ENCODE measurements at regions of chr10 and their contacts with region 1.

Region 1: DNA sequence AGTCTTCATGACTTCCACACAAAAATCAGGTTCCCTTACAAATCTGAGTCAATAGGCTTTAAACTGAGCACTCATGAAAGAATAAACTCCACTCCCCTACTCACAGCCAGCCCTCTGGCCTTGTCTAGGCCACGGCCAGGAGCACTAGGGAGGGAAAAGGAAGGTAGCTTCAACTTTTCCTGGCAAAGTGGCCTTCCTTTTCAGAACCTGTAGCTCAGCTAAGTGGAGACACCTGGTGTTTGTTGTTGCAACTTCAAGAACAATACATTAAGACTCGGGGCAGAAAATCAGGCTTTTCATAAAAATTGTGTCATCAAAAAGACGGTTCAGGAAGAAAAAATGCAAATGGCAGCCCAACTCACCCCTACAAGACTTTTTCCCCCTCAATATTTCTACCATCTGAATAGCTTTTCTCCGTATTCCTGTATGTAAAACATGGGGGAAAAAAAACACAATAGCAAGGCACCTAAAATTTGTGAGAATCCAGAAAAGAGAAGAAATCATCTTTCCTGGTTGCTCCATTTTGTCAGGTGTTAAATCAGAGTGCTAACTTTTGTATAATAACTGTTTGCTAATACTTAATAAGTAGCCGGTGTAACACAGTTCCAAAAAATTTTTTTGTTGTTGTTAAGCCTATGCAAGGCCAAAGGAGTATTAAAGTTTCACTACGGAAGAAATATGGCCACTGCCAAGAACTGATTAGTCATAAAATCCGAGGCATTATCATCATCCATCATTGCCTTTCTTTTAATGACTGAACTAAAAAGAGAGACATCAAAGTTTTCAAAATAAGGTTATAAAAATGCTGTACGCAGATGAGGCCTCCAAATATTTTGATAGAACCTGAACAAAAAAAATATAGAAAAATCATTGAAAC is 66.2 kb upstream of the ARID5B start:
- DNase-seq: peak; percentile 70 to 74
- H3K4me3 ChIP-seq: no peak overlapping the region
- H3K4me3 Mint-ChIP-seq: peak overlapping the region; percentile 58
- H3K27ac Mint-ChIP-seq: peak overlapping the region; percentile 94
- H3K4me1 ChIP-seq: peaks cover 80% of the 10 kb centered on the region
- H3K4me1 Mint-ChIP-seq: peaks cover 61% of the 10 kb centered on the region
- H3K27me3 ChIP-seq: no peaks in the 10 kb centered on the region
- H3K27me3 Mint-ChIP-seq: no peaks in the 10 kb centered on the region
- CTCF ChIP-seq: peak; percentile 75 to 85

Region 2: GRCh38 chr10:61223576-61223975 is 611.7 kb before region 1 on chr10:
- CTCF ChIA-PET with region 1: no interaction called
- POLR2A ChIA-PET with region 1: no interaction called
- intact Hi-C with region 1: no loop called
- DNase-seq: no peak
- H3K4me3 ChIP-seq: no peak overlapping the region
- H3K4me3 Mint-ChIP-seq: no peak overlapping the region
- H3K27ac Mint-ChIP-seq: no peak overlapping the region
- H3K4me1 ChIP-seq: no peaks in the 10 kb centered on the region
- H3K4me1 Mint-ChIP-seq: no peaks in the 10 kb centered on the region
- H3K27me3 ChIP-seq: no peaks in the 10 kb centered on the region
- H3K27me3 Mint-ChIP-seq: peaks cover 4% of the 10 kb centered on the region
- CTCF ChIP-seq: no peak

Region 3: DNA sequence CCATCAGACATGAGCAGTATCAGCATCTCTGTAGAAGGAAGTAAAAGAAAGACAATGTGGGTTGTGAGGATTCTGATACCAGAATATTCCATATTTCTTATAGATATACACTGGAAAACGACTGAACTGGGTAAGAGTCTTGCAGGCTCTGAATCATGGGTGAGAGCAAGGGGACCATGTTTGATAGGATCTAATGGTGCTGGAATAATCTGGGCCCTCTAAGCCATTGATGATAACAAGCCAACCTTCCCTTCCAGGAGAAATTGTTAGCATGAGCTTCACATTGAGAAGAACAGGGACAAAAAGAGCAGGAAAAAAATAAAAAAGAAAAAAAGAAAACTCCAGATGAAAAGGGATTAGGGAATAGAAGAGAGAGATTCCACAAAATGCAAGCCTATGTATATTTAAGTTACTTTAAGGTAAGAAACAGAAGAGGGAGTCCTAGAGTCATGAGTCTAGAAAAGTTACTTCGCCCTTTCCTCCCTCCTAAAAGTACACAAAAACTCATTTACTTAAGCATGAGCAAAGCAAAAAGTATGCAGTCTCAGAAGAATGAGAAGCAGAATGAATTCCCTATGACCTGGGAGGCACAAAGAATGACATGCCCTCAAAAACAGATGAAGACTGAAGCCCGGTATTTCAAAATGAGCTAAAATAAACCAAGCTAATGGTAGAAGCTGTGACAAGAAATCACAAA is 564.0 kb before region 1 on chr10:
- CTCF ChIA-PET with region 1: no interaction called
- POLR2A ChIA-PET with region 1: no interaction called
- intact Hi-C with region 1: loop called (anchors 5 kb)
- DNase-seq: peak in 1 of 2 experiments; percentile 68
- H3K4me3 ChIP-seq: no peak overlapping the region
- H3K4me3 Mint-ChIP-seq: peak overlapping the region; percentile 51
- H3K27ac Mint-ChIP-seq: peak overlapping the region; percentile 19
- H3K4me1 ChIP-seq: peaks cover 17% of the 10 kb centered on the region
- H3K4me1 Mint-ChIP-seq: peaks cover 12% of the 10 kb centered on the region
- H3K27me3 ChIP-seq: no peaks in the 10 kb centered on the region
- H3K27me3 Mint-ChIP-seq: no peaks in the 10 kb centered on the region
- CTCF ChIP-seq: peak; percentile 55 to 62

Region 4: DNA sequence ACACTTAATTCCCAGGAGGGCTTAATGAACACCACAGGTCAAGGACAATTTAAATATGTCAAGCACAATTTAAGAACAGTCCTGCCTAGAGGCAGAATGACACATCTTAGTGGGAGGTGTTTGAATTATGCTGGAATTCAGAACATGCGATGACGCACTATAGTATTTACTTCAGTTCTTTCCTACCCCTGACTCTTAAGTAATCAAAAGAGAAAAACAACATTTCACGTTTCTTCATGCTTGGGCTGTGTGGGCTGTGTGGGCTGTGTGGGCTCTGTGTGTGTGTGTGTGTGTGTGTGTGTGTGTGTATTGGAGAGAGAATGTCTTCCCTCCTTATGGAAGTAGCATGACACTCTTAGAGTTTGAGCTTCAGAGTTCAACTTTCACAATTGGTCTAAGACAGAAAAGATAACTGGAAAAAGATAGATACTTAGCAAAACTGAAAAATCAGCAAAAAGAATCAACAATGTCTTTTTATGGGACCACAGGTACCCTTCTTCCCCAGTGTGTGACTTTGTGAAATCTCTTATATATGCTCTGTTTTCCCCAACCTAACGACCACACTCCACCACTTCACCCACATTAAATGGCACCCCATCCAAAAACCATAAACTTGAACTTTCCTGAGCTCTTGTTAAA is 206.3 kb before region 1 on chr10:
- CTCF ChIA-PET with region 1: no interaction called
- POLR2A ChIA-PET with region 1: interaction called, 5 read pairs
- intact Hi-C with region 1: loop called (anchors 5 kb)
- DNase-seq: peak in 1 of 2 experiments; percentile 55
- H3K4me3 ChIP-seq: no peak overlapping the region
- H3K4me3 Mint-ChIP-seq: peak overlapping the region; percentile 8
- H3K27ac Mint-ChIP-seq: peak overlapping the region; percentile 78
- H3K4me1 ChIP-seq: peaks cover 17% of the 10 kb centered on the region
- H3K4me1 Mint-ChIP-seq: peaks cover 19% of the 10 kb centered on the region
- H3K27me3 ChIP-seq: no peaks in the 10 kb centered on the region
- H3K27me3 Mint-ChIP-seq: no peaks in the 10 kb centered on the region
- CTCF ChIP-seq: no peak

Region 5: GRCh38 chr10:61812052-61812721 is 23.1 kb before region 1 on chr10:
- CTCF ChIA-PET with region 1: no interaction called
- POLR2A ChIA-PET with region 1: no interaction called
- intact Hi-C with region 1: no loop called
- DNase-seq: no peak
- H3K4me3 ChIP-seq: no peak overlapping the region
- H3K4me3 Mint-ChIP-seq: no peak overlapping the region
- H3K27ac Mint-ChIP-seq: no peak overlapping the region
- H3K4me1 ChIP-seq: no peaks in the 10 kb centered on the region
- H3K4me1 Mint-ChIP-seq: no peaks in the 10 kb centered on the region
- H3K27me3 ChIP-seq: no peaks in the 10 kb centered on the region
- H3K27me3 Mint-ChIP-seq: no peaks in the 10 kb centered on the region
- CTCF ChIP-seq: no peak

Region 6: DNA sequence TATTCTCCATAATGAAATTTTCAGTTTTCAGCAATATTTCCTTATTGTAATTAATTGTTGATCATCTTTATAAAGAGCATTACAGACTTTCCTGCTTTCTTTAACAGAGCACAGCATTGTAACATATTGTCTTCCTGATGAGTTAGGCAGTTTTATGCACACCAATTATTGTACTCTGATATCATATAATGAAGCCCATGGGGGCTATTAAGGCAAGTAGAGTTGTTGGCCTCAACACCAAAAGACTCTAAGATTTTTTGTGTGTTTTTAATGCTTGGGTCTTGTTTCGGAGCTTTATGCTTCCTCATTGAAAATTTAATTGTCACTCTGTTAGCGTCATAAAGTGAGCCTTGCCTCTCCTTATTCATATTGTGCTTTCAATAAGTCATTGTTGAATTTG is 17.0 kb after region 1 on chr10:
- CTCF ChIA-PET with region 1: interaction called, 16 read pairs
- POLR2A ChIA-PET with region 1: interaction called, 17 read pairs
- intact Hi-C with region 1: loop called (anchors 1 kb)
- DNase-seq: no peak
- H3K4me3 ChIP-seq: no peak overlapping the region
- H3K4me3 Mint-ChIP-seq: no peak overlapping the region
- H3K27ac Mint-ChIP-seq: peak overlapping the region; percentile 51
- H3K4me1 ChIP-seq: peaks cover 46% of the 10 kb centered on the region
- H3K4me1 Mint-ChIP-seq: peaks cover 44% of the 10 kb centered on the region
- H3K27me3 ChIP-seq: no peaks in the 10 kb centered on the region
- H3K27me3 Mint-ChIP-seq: no peaks in the 10 kb centered on the region
- CTCF ChIP-seq: no peak

Region 7: DNA sequence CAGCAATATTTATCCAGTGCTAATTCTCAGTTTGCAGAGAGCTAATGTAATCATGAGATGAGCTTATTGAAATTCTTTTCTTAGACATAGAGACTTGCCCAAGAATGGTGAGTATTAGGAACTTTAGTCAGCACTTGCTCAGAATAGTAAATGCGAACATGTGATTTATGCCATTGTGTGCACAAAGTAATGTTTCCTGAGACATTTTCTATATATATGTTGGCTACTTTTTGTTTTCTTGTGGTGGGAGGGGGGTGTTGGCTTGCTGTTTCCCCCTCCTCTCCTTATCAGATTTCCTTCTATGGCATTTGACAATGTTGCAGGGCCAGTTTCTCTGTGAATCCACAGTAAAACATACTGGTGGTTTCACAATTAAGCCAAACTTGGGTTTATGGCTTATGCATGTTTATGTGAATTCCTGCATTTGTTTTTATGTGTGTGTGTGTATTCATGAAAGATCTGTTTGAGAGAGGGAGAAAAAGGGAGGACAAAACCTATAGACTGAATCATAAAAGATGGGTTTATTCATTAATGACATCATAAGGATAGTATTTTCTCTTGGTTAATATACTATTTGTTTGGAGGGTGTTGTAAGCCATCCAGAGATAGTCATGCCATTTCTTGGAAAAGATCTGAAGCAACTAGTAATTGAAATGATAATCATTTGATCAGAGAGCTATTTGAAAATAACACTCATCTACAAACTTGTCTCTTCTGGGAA is 102.5 kb after region 1 on chr10:
- CTCF ChIA-PET with region 1: interaction called, 3 read pairs
- POLR2A ChIA-PET with region 1: no interaction called
- intact Hi-C with region 1: loop called (anchors 1 kb)
- DNase-seq: peak; percentile 78 to 90
- H3K4me3 ChIP-seq: no peak overlapping the region
- H3K4me3 Mint-ChIP-seq: peak overlapping the region; percentile 37
- H3K27ac Mint-ChIP-seq: peak overlapping the region; percentile 33
- H3K4me1 ChIP-seq: peaks cover 88% of the 10 kb centered on the region
- H3K4me1 Mint-ChIP-seq: peaks cover 73% of the 10 kb centered on the region
- H3K27me3 ChIP-seq: no peaks in the 10 kb centered on the region
- H3K27me3 Mint-ChIP-seq: no peaks in the 10 kb centered on the region
- CTCF ChIP-seq: no peak

Region 8: DNA sequence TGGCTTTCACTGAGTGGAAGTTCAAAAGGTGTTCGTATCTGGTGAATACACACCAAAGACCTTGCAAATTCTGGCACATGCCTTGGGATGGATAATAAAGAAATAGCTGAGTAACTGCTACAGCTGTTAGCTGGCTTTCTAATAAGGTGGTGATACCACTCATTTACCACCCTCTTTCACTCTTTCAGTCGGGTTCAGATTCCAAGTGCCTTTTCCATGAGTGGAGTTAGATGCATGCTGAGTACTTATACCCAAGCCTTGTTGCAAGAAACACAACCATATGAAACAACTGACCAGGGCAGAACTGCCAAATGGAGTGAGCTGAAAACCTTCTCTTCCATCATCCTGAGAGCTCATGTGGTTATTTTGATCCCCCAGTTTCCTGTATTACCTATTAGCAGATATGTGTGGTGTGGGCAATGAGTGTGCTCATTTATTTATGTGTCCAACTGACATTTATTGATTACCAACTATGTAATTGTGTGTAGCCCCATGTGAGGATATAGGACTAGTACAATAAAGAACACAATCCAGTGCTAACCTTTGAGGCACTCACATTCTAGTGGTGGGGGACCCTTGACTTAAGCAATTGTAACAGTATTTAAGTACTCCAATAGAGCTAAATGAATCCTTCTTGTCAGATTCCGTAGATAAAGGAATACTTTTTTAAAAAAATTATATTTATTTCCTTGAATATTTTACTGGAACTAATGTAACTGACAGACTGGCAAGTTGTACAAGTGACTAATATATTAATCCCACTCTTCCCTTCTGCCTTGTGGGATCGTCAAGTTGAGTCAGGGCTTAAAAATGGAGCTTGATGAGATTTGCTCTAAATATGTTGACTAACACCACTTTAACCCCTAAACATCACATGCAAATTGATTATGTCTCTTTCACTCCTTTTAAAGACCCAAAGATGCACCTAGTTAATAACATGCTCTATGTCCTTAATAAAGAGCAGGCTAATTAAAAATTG is 190.9 kb after region 1 on chr10:
- CTCF ChIA-PET with region 1: no interaction called
- POLR2A ChIA-PET with region 1: no interaction called
- intact Hi-C with region 1: loop called (anchors 1 kb)
- DNase-seq: no peak
- H3K4me3 ChIP-seq: no peak overlapping the region
- H3K4me3 Mint-ChIP-seq: no peak overlapping the region
- H3K27ac Mint-ChIP-seq: peak overlapping the region; percentile 82
- H3K4me1 ChIP-seq: peaks cover 91% of the 10 kb centered on the region
- H3K4me1 Mint-ChIP-seq: peaks cover 90% of the 10 kb centered on the region
- H3K27me3 ChIP-seq: no peaks in the 10 kb centered on the region
- H3K27me3 Mint-ChIP-seq: no peaks in the 10 kb centered on the region
- CTCF ChIP-seq: no peak

Region 9: DNA sequence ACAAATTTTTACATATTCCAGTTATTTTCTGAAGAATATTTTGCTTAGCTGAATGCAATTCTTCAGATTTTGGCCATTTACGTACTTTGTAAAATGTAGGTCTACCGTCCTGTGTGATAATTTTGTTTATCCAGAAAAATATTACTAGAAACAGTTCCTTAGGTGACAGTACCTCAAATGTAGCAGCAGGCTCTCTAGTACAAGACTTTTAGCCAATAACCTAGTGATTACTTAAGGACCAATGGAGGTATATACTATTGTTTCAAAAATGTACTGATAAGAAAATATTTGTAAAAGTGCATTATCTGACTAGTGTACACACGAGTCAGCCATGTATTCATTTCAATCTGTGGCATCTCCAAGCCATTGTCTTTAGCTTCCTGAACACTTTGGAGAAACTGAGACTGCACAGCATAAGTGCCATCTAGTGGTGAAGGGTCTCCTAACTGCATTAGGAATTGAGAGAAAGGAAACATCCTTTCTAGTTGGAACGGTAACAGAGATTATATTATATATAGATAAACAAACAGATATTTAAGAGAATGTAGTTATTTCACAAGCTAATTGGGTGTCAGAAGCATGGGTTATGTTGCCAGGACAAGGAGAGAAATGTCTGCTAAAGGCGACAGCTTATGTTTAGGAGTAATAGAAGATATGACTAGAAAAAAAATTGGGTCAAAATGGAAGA is 409.6 kb after region 1 on chr10:
- CTCF ChIA-PET with region 1: interaction called, 4 read pairs
- POLR2A ChIA-PET with region 1: no interaction called
- intact Hi-C with region 1: loop called (anchors 2 kb)
- DNase-seq: peak; percentile 70 to 82
- H3K4me3 ChIP-seq: no peak overlapping the region
- H3K4me3 Mint-ChIP-seq: no peak overlapping the region
- H3K27ac Mint-ChIP-seq: peak overlapping the region; percentile 33
- H3K4me1 ChIP-seq: peaks cover 25% of the 10 kb centered on the region
- H3K4me1 Mint-ChIP-seq: peaks cover 39% of the 10 kb centered on the region
- H3K27me3 ChIP-seq: no peaks in the 10 kb centered on the region
- H3K27me3 Mint-ChIP-seq: no peaks in the 10 kb centered on the region
- CTCF ChIP-seq: peak; percentile 95 to 98

Region 10: GRCh38 chr10:62492012-62492869 is 656.9 kb after region 1 on chr10:
- CTCF ChIA-PET with region 1: no interaction called
- POLR2A ChIA-PET with region 1: no interaction called
- intact Hi-C with region 1: no loop called
- DNase-seq: peak in 1 of 2 experiments; percentile 36
- H3K4me3 ChIP-seq: no peak overlapping the region
- H3K4me3 Mint-ChIP-seq: no peak overlapping the region
- H3K27ac Mint-ChIP-seq: no peak overlapping the region
- H3K4me1 ChIP-seq: no peaks in the 10 kb centered on the region
- H3K4me1 Mint-ChIP-seq: no peaks in the 10 kb centered on the region
- H3K27me3 ChIP-seq: 0 out of 2 replicates have a peak, but pooled peaks cover 1% of the 10 kb centered on the region
- H3K27me3 Mint-ChIP-seq: peaks cover 19% of the 10 kb centered on the region
- CTCF ChIP-seq: peak; percentile 79 to 83